HEK293 (cell line): ENCODE measurements at regions of chr17 and their contacts with region 1.

Region 1: DNA sequence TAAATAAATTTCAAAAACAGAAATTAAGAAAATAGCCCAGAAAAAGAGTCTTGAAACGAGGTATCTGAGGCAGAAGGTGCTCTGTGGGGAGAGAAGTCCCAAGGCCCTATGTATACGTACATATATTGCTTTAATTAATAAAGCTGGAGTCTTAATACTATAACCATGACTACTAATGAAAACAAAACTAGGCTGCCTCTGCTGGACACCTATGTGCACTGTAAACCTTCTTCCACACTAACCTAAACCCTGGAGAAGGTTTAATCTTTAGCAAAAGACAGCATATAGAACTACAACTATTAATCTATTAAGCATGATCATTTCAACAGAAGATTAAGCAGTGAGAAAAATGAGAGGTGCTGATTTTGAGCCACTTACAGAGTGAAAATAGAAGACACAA is 153.9 kb upstream of the C17orf78 start:
- H3K4me3 ChIP-seq: no peak overlapping the region
- H3K27ac ChIP-seq: no peak overlapping the region
- H3K4me1 ChIP-seq: no peaks in the 10 kb centered on the region
- CTCF ChIP-seq: no peak

Region 2: DNA sequence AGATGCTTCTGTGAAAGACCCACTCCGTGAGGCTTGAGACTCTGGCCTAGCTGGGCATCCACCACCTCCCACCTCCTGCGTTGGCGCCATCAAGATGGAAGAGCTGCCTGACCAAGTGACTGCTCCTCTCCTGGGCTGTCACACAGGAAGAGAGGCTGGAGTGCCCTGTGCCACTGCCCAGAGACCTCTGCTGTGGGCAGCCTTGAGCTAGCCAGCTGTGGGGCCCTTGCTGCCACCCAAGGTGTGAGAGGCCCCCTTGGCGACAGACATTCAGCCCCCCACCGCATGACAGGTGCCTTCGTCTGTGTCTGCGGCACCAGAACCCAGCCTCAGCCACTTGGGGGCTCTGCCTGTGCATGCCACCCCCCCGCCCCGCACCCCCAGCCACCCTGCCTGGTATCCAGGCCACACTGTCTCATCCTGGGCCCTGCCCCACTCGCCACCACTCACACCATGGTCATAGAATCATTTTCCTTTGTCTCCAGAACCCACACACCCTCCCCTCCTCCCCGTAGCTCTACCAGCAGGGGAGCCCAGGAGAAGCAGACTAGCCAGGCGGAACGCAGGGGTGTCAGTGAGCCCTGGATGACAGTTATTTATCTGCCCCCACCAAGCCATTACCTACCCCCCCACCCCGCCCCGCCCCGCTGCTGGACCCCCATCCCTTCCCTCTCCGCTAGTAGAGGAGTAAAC is 405.5 kb before region 1 on chr17:
- CTCF ChIA-PET with region 1: no interaction called
- POLR2A ChIA-PET with region 1: no interaction called
- H3K4me3 ChIP-seq: no peak overlapping the region
- H3K27ac ChIP-seq: no peak overlapping the region
- H3K4me1 ChIP-seq: 0 out of 2 replicates have a peak, but pooled peaks cover 3% of the 10 kb centered on the region
- CTCF ChIP-seq: no peak

Region 3: GRCh38 chr17:37062021-37062420 is 159.8 kb before region 1 on chr17:
- CTCF ChIA-PET with region 1: no interaction called
- POLR2A ChIA-PET with region 1: no interaction called
- H3K4me3 ChIP-seq: no peak overlapping the region
- H3K27ac ChIP-seq: no peak overlapping the region
- H3K4me1 ChIP-seq: no peaks in the 10 kb centered on the region
- CTCF ChIP-seq: no peak

Region 4: GRCh38 chr17:37206299-37206698 is 15.6 kb before region 1 on chr17:
- CTCF ChIA-PET with region 1: interaction called, 10 read pairs
- POLR2A ChIA-PET with region 1: no interaction called
- H3K4me3 ChIP-seq: no peak overlapping the region
- H3K27ac ChIP-seq: no peak overlapping the region
- H3K4me1 ChIP-seq: no peaks in the 10 kb centered on the region
- CTCF ChIP-seq: no peak

Region 5: GRCh38 chr17:37239690-37240334 is 17.9 kb after region 1 on chr17:
- CTCF ChIA-PET with region 1: interaction called, 35 read pairs
- POLR2A ChIA-PET with region 1: no interaction called
- H3K4me3 ChIP-seq: no peak overlapping the region
- H3K27ac ChIP-seq: no peak overlapping the region
- H3K4me1 ChIP-seq: no peaks in the 10 kb centered on the region
- CTCF ChIP-seq: 0 out of 2 replicates have a peak, but pooled peaks have one; percentile 38